ENCODE measurements at regions of chr20 and their contacts with region 1.

Region 1: GRCh38 chr20:653110-653589 is at the start of gene SRXN1:
- DNase-seq: peak; percentile 84
- ATAC-seq: peak; percentile 94
- H3K4me3 Mint-ChIP-seq: peak within 1 kb of the TSS; percentile 81
- H3K27ac Mint-ChIP-seq: peak within 1 kb of the TSS; percentile 67
- H3K4me1 Mint-ChIP-seq: peaks cover 23% of the 10 kb centered on the region
- H3K27me3 Mint-ChIP-seq: peaks cover 8% of the 10 kb centered on the region
- CTCF ChIP-seq: no peak
- total RNA-seq, gene SRXN1: 6.1 and 7.4 TPM in 2 replicates

Region 2: DNA sequence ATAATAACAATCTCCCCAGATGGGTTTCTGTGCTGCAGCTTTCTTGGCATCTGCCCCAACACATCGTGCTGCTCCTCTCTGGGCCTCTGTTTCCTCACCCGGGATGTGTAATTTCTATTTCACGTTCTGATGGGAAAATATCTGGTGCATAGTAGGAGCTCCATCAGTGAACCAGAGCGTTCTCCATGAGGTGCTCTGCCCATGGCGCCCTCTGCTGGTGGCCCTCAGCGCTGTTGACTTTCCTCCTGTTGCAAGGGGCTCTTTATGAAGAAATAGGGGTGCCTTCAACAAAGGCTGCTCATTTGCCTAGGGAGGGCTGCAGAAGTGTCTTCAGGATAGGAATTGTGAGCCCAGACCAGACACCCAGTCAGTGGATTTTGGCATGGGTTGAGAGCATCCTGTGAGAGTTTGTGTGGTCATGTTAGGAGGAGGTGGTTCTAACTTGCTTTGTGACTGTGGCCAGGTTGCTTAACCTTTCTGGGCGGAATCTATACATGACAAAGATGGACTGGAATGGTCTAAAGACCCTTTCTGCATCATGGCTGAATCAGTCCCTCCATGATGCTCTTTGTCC is 14.3 kb after region 1 on chr20:
- CTCF ChIA-PET with region 1: no interaction called
- POLR2A ChIA-PET with region 1: no interaction called
- intact Hi-C with region 1: no loop called
- DNase-seq: no peak
- ATAC-seq: no peak
- H3K4me3 Mint-ChIP-seq: no peak overlapping the region
- H3K27ac Mint-ChIP-seq: no peak overlapping the region
- H3K4me1 Mint-ChIP-seq: no peaks in the 10 kb centered on the region
- H3K27me3 Mint-ChIP-seq: peaks cover 56% of the 10 kb centered on the region
- CTCF ChIP-seq: no peak

Region 3: GRCh38 chr20:728248-728944 is 75.2 kb after region 1 on chr20:
- CTCF ChIA-PET with region 1: no interaction called
- POLR2A ChIA-PET with region 1: no interaction called
- intact Hi-C with region 1: loop called (anchors 1 kb)
- DNase-seq: peak; percentile 30
- ATAC-seq: peak; percentile 54
- H3K4me3 Mint-ChIP-seq: no peak overlapping the region
- H3K27ac Mint-ChIP-seq: no peak overlapping the region
- H3K4me1 Mint-ChIP-seq: peaks cover 4% of the 10 kb centered on the region
- H3K27me3 Mint-ChIP-seq: peaks cover 54% of the 10 kb centered on the region
- CTCF ChIP-seq: no peak

Measured in activated B cell treated with CpG ODN at 0.5 μM for 24 hours (primary cell).